ENCODE measurements at regions of chr12 and their contacts with region 1.

Region 1: GRCh38 chr12:100632445-100632892 is 59.0 kb downstream of the GAS2L3 start:
- DNase-seq: no peak
- ATAC-seq: no peak
- H3K4me3 ChIP-seq: no peak overlapping the region
- H3K27ac ChIP-seq: no peak overlapping the region
- H3K4me1 ChIP-seq: no peaks in the 10 kb centered on the region
- H3K27me3 ChIP-seq: no peaks in the 10 kb centered on the region
- CTCF ChIP-seq: no peak

Region 2: GRCh38 chr12:99154216-99154982 is 1478.1 kb before region 1 on chr12:
- intact Hi-C with region 1: loop called in 1 of 10 experiments (anchors 5 kb)
- DNase-seq: no peak
- ATAC-seq: peak in 6 of 8 donors; percentile 39 to 73 (median 58)
- H3K4me3 ChIP-seq: peak overlapping the region in 8 of 10 donors; percentile 9 to 47 (median 28)
- H3K27ac ChIP-seq: peak overlapping the region in 4 of 10 donors; percentile 16 to 52 (median 30)
- H3K4me1 ChIP-seq: peaks cover 0 to 11% (median 0%) of the 10 kb centered on the region in 9 donors
- H3K27me3 ChIP-seq: no peaks in the 10 kb centered on the region
- CTCF ChIP-seq: no peak

Region 3: DNA sequence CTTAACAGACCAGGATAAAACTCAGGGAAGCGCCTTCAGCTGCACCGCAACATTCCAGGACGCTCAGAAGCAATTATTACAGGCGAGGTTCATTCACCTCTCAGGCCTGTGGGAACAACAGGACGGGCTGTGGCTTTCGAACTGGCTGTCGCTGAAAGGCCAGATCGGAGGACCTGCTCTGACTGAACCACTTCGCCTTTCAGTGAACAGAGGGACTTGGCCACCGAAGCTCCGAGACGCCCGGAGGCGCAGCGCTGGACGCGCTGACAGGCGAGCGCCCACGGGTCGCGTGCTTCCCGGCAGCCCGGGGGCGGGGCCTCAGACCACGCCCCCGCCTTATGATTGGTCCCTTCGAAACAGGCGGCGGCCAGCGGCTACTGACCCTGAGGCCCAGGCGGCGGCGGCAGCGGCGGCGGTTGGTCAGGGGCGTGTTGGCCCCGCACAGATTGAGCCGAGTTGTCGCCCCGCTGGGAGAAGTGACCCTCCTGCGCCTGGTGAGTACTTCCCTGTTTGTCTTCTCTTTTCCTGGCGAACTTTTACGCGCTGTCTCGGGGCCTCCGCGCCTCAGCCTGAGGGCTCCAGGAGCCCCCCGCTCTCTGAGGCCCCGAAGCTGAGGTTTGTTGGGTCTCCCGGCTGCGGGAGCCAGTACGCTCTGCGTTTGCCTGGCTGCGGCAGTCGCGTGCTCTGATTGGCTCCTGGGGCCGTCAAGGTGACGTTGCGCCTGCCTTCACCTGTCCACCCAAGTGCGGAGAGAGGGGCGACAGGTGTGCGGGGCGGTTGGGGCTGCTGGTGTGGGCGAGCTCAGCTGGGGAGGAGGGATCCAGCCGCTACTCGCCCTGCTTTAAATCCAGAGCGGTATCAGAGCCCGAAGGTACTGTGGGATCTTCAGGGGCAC is 58.9 kb before region 1 on chr12 and contains the start of gene GAS2L3:
- intact Hi-C with region 1: no loop called
- DNase-seq: peak; percentile 87 to 91
- ATAC-seq: peak; percentile 99 to 100 (median 100)
- H3K4me3 ChIP-seq: peak within 1 kb of the TSS; percentile 55 to 79 (median 65)
- H3K27ac ChIP-seq: peak within 1 kb of the TSS in 9 of 10 donors; percentile 41 to 88 (median 70)
- H3K4me1 ChIP-seq: peaks cover 0 to 31% (median 17%) of the 10 kb centered on the region in 9 donors
- H3K27me3 ChIP-seq: peaks cover 0 to 5% (median 0%) of the 10 kb centered on the region in 7 donors
- CTCF ChIP-seq: no peak
- total RNA-seq, gene GAS2L3: 1.3 to 5.6 (median 2.0) TPM

Region 4: DNA sequence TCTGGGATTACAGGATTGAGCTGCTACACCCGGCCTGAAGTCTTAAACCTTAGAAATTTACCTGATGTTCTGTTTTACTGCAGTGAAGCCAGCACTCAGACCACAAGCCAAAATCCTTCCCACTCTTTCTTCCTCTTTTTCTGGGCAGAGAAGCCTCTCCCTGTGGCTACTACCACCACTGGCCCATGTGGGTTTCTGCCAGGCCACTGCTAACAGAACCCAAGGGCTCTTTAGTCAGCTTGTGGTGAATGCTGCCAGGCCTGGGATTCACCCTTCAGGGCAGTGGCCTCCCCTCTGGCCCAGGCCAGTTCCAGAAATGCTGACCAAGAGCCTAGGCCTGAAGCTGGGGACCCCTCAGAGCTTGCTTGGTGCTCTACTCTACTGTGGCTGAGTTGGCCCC is 23.7 kb before region 1 on chr12:
- intact Hi-C with region 1: no loop called
- DNase-seq: peak in 1 of 2 donors; percentile 11
- ATAC-seq: peak in 1 of 8 donors; percentile 20
- H3K4me3 ChIP-seq: no peak overlapping the region
- H3K27ac ChIP-seq: no peak overlapping the region
- H3K4me1 ChIP-seq: peaks cover 0 to 23% (median 0%) of the 10 kb centered on the region in 9 donors
- H3K27me3 ChIP-seq: no peaks in the 10 kb centered on the region
- CTCF ChIP-seq: no peak

Measured in heart right ventricle (tissue), 16 donors.